ENCODE measurements at regions of chr1 and their contacts with region 1.

Region 1: GRCh38 chr1:70509996-70510876 is 99.2 kb downstream of the CTH start:
- DNase-seq: peak; percentile 71
- H3K4me3 ChIP-seq: no peak overlapping the region
- H3K27ac ChIP-seq: no peak overlapping the region
- H3K4me1 ChIP-seq: no peaks in the 10 kb centered on the region
- H3K27me3 ChIP-seq: no peaks in the 10 kb centered on the region
- CTCF ChIP-seq: peak; percentile 44 to 46
- POLR2A ChIP-seq: no peak

Region 2: DNA sequence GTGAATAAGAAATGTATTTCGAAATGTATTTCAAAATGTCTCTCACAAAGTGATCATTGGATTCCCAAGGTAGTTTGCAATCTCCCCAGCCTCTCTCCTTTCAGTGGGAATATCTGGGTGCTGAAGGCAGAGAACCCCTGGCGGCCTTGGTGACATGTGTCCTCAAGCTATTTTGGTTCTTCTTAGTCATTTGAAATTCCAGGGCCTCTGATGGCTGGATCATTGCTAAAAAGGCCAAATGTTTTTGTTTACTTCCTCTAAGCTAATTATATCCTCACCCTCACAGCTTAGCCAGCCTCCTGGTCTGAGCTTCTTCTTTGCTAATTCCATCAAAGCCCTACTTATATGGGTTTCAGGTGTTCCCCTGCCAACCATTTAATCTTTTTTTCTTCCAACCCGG is 376.1 kb before region 1 on chr1:
- CTCF ChIA-PET with region 1: interaction called, 5 read pairs
- POLR2A ChIA-PET with region 1: no interaction called
- dilution Hi-C with region 1: no loop called
- intact Hi-C with region 1: loop called (anchors 1 kb)
- DNase-seq: no peak
- H3K4me3 ChIP-seq: no peak overlapping the region
- H3K27ac ChIP-seq: no peak overlapping the region
- H3K4me1 ChIP-seq: no peaks in the 10 kb centered on the region
- H3K27me3 ChIP-seq: no peaks in the 10 kb centered on the region
- CTCF ChIP-seq: no peak
- POLR2A ChIP-seq: no peak

Region 3: GRCh38 chr1:70227439-70227838 is 282.8 kb before region 1 on chr1:
- CTCF ChIA-PET with region 1: no interaction called
- POLR2A ChIA-PET with region 1: no interaction called
- dilution Hi-C with region 1: no loop called
- intact Hi-C with region 1: loop called (anchors 5 kb)
- DNase-seq: no peak
- H3K4me3 ChIP-seq: no peak overlapping the region
- H3K27ac ChIP-seq: no peak overlapping the region
- H3K4me1 ChIP-seq: peaks cover 21% of the 10 kb centered on the region
- H3K27me3 ChIP-seq: no peaks in the 10 kb centered on the region
- CTCF ChIP-seq: no peak
- POLR2A ChIP-seq: no peak

Region 4: GRCh38 chr1:70256664-70257063 is 253.6 kb before region 1 on chr1:
- CTCF ChIA-PET with region 1: no interaction called
- POLR2A ChIA-PET with region 1: no interaction called
- dilution Hi-C with region 1: no loop called
- intact Hi-C with region 1: loop called (anchors 2 kb)
- DNase-seq: no peak
- H3K4me3 ChIP-seq: no peak overlapping the region
- H3K27ac ChIP-seq: no peak overlapping the region
- H3K4me1 ChIP-seq: no peaks in the 10 kb centered on the region
- H3K27me3 ChIP-seq: no peaks in the 10 kb centered on the region
- CTCF ChIP-seq: no peak
- POLR2A ChIP-seq: no peak

Region 5: GRCh38 chr1:70436622-70437251 is 73.5 kb before region 1 on chr1:
- CTCF ChIA-PET with region 1: interaction called, 9 read pairs
- POLR2A ChIA-PET with region 1: no interaction called
- dilution Hi-C with region 1: no loop called
- intact Hi-C with region 1: loop called (anchors 1 kb)
- DNase-seq: peak; percentile 21
- H3K4me3 ChIP-seq: no peak overlapping the region
- H3K27ac ChIP-seq: no peak overlapping the region
- H3K4me1 ChIP-seq: peaks cover 11% of the 10 kb centered on the region
- H3K27me3 ChIP-seq: no peaks in the 10 kb centered on the region
- CTCF ChIP-seq: no peak
- POLR2A ChIP-seq: no peak

Measured in endothelial cell of umbilical vein (primary cell).